Prostate gland (tissue), 2 donors: ENCODE measurements at regions of chr6 and their contacts with region 1.

Region 1: DNA sequence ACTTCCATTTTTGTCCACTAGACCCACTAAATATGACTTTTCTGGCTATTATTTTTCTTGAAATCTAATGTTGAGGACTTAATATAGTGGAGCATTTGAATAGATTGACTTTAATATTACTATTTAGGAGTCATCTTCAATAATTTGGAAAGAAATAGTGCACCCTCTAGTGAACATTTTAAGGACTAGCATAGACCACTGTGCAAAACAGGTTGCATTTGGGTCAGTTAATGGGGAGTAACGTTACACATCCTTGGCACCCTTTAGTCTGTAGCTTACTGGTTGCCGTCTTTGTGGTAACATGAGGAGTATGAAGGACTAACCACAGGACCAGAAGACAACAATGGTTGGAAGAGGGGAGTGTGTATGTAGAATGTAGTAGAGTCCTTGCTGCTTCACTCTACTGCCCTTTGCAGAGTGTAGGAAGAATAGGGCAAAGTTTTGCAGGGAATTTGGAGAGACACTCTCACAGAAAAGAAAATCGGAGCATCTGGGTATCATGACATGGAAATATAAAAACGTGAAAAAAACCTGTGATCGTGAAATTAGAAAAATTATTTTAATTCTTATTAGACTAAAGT is 25.2 kb downstream of the RFPL4B start:
- DNase-seq: no peak
- H3K4me3 ChIP-seq: no peak overlapping the region
- H3K27ac ChIP-seq: no peak overlapping the region
- H3K4me1 ChIP-seq: no peaks in the 10 kb centered on the region
- H3K27me3 ChIP-seq: no peaks in the 10 kb centered on the region
- CTCF ChIP-seq: peak in 2 of 4 experiments; percentile 19 to 26
- POLR2A ChIP-seq: no peak

Region 2: DNA sequence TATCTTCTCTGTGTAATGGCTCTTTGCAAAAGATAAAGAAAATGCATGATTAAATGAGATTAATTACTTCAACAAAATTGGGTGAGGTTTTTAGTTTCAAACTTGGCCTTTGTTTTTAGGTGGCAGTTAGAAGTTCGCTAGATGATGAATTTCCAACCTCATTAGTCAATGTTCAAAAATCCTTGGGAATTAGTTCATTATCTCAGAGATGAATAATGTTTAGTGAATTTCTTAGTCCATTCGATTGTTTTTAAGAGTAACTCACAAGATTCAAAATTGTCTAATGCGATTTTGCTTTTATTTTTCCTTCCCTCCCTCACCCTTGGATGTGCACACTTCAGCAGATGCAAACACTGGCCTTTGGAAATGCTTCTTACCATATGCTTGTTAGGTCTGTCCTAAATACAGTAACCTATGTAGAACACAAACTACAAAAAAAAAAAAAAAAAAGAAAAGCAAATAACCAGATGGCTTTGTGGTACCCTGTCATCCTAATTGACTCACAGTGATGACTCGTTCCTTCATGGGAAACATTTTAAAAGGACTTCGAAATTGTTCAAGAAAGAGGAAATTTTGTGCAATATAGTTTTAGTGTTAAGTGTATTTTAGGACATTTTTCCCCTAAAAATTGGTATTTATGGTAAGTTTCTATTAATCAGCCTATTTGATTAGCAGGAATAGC is 218.2 kb before region 1 on chr6:
- intact Hi-C with region 1: no loop called
- DNase-seq: no peak
- H3K4me3 ChIP-seq: no peak overlapping the region
- H3K27ac ChIP-seq: no peak overlapping the region
- H3K4me1 ChIP-seq: no peaks in the 10 kb centered on the region
- H3K27me3 ChIP-seq: no peaks in the 10 kb centered on the region
- CTCF ChIP-seq: no peak
- POLR2A ChIP-seq: no peak

Region 3: GRCh38 chr6:112180095-112180820 is 192.1 kb before region 1 on chr6:
- intact Hi-C with region 1: loop called (anchors 5 kb)
- DNase-seq: peak; percentile 78
- H3K4me3 ChIP-seq: no peak overlapping the region
- H3K27ac ChIP-seq: no peak overlapping the region
- H3K4me1 ChIP-seq: no peaks in the 10 kb centered on the region
- H3K27me3 ChIP-seq: no peaks in the 10 kb centered on the region
- CTCF ChIP-seq: peak; percentile 55 to 82 (median 74)
- POLR2A ChIP-seq: no peak

Region 4: DNA sequence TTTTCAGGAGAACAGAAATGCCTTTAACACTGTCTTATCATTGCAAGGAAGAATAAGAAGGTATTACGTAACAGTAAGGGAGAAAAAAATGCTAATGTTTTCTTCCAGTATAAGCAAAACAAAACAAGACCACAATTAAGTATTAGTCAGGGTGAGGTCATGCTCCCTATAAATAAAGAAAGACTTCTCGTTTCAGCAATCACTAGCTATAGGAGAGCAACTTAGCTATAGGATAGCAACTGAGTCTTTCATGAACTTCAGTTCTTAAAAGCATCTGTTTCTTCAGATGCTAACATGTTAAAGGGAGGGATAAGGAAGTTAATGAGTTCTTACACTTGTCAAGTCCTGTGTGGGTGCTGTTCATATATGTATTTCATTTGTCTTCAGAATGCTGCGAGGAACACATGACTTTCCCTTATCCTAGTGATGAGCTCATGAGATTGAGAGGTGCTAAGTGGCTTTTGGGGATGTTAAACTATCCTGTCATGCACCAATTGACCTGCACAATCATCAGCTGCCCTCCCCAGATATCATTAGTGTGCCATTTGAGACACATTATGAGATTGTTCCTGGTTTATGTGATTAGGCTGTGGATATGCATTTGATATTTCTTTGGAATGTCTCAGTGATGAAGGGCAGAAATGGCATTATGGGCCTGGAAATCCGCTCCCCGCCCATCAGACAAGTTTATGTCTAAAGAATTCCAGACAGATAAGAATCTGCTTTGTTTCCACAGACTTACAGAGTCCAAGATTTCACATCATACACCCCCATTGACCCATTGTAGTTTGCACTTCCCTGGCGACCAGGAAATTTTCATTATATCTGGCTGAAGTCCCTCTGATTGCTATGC is 155.4 kb before region 1 on chr6:
- intact Hi-C with region 1: no loop called
- DNase-seq: no peak
- H3K4me3 ChIP-seq: no peak overlapping the region
- H3K27ac ChIP-seq: no peak overlapping the region
- H3K4me1 ChIP-seq: no peaks in the 10 kb centered on the region
- H3K27me3 ChIP-seq: no peaks in the 10 kb centered on the region
- CTCF ChIP-seq: no peak
- POLR2A ChIP-seq: no peak

Region 5: DNA sequence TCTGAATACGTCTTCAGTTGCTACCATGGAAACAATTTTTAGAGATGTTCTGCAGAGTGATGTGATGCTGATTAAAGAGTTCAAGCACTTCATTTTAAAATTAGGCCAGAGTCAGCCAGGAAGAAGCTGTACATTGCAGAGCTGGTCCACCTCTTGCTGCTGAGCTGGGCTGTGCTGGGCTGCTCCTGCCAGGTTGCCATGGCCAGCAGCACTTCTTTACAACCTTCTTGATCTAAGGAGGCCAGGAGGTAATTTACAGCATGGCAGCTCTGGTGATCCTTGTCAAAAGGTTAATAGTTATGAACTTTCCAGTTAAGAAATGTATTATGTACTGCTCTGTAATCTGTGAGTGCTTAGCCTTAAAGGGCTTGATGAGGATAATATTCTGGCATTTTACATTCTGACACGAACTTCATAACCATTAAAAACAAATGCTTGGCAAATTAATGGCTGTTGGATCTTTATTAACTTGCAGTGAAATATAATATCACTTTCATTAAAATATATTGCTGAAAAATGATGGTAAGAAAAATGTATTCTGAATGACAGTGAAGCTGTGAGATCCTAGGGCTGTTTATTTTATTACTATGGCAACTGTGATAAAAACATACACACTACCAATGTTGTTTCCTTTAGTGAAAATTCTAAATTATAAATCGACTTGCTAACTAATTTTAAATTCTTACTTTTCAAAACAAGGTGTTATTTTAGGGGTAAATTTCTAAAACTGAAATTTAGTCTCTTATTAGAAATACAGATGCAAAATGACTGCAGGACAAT is 234.5 kb after region 1 on chr6:
- intact Hi-C with region 1: no loop called
- DNase-seq: no peak
- H3K4me3 ChIP-seq: no peak overlapping the region
- H3K27ac ChIP-seq: no peak overlapping the region
- H3K4me1 ChIP-seq: no peaks in the 10 kb centered on the region
- H3K27me3 ChIP-seq: no peaks in the 10 kb centered on the region
- CTCF ChIP-seq: no peak
- POLR2A ChIP-seq: no peak